Activated CD8-positive, alpha-beta memory T cell treated with anti-CD3 and anti-CD28 coated beads, Interleukin-2, amount 10 ng/mL, durations not matched to agents 7 days and 5 days (primary cell): ENCODE measurements at regions of chr19 and their contacts with region 1.

Region 1: DNA sequence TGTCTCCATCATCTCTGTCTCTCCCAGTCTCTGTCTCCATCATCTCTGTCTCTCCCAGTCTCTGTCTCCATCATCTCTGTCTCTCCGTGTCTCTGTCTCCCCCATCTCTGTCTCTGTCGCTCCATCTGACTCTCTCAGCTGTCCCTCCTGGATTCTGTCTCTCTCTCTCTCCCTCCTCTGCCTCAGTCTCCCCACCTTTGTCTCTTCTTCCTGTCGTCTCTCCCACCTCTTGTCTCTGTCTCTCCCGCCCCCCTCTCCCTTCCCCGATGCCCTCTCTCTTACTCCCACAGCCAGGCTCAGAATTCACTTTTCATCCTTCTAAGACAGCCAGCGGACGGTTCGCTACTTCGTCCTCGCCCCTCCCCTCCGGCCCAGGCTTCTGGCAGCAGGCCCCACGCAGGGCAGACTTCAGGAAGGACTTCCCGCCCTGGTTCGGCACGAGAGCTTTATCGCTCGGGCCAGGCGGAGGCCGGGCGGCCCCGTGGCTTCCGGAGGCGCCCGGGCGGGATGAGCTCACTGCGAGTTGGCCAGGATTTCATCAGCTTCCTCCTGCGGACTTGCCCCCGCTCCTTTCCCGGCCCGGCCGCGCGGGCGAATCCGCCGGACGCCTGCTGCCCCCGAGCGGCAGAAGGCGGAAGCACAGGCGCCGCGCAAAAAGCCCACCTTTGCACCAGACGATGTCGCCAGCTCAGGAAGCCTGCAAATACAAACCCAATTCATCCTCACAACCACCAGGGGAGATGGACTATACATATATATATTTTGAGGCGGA is 12.4 kb upstream of the CCDC9 start:
- DNase-seq: peak; percentile 96
- ATAC-seq: peak; percentile 84
- H3K4me3 Mint-ChIP-seq: peak overlapping the region; percentile 78
- H3K27ac Mint-ChIP-seq: peak overlapping the region; percentile 91
- H3K4me1 Mint-ChIP-seq: peaks cover 36% of the 10 kb centered on the region
- H3K27me3 Mint-ChIP-seq: peaks cover 3% of the 10 kb centered on the region

Region 2: GRCh38 chr19:47035127-47036096 is 208.6 kb before region 1 on chr19:
- CTCF ChIA-PET with region 1: interaction called, 14 read pairs
- DNase-seq: peak; percentile 96
- ATAC-seq: peak; percentile 93
- H3K4me3 Mint-ChIP-seq: peak overlapping the region; percentile 88
- H3K27ac Mint-ChIP-seq: peak overlapping the region; percentile 79
- H3K4me1 Mint-ChIP-seq: peaks cover 17% of the 10 kb centered on the region
- H3K27me3 Mint-ChIP-seq: peaks cover 27% of the 10 kb centered on the region

Region 3: GRCh38 chr19:47145639-47146486 is 98.1 kb before region 1 on chr19:
- CTCF ChIA-PET with region 1: interaction called, 106 read pairs
- DNase-seq: no peak
- ATAC-seq: peak; percentile 61
- H3K4me3 Mint-ChIP-seq: no peak overlapping the region
- H3K27ac Mint-ChIP-seq: peak overlapping the region; percentile 55
- H3K4me1 Mint-ChIP-seq: peaks cover 46% of the 10 kb centered on the region
- H3K27me3 Mint-ChIP-seq: no peaks in the 10 kb centered on the region

Region 4: GRCh38 chr19:47157431-47158321 is 86.3 kb before region 1 on chr19:
- CTCF ChIA-PET with region 1: interaction called, 32 read pairs
- DNase-seq: peak; percentile 51
- ATAC-seq: peak; percentile 46
- H3K4me3 Mint-ChIP-seq: peak overlapping the region; percentile 10
- H3K27ac Mint-ChIP-seq: peak overlapping the region; percentile 73
- H3K4me1 Mint-ChIP-seq: peaks cover 44% of the 10 kb centered on the region
- H3K27me3 Mint-ChIP-seq: no peaks in the 10 kb centered on the region

Region 5: DNA sequence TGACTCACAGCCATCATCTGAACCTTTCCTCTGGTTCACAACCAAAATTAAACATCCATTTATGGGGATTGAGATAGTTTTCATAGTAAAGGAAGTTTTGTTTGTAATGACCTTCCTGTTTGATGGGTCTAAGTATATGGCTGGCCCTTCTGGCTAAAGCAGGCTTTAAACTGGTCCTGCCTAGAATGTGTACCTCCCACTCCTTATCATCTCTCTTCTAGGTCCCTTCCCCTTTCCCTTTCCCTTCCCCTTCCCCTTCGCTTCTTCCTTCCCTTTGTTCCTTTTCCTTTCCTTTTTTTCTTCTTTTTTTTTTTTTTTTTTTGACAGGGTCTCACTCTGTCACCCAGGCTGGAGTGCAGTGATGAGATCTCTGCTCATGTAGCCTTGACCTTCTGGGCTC is 48.5 kb before region 1 on chr19:
- CTCF ChIA-PET with region 1: interaction called, 38 read pairs
- DNase-seq: no peak
- ATAC-seq: no peak
- H3K4me3 Mint-ChIP-seq: no peak overlapping the region
- H3K27ac Mint-ChIP-seq: no peak overlapping the region
- H3K4me1 Mint-ChIP-seq: peaks cover 7% of the 10 kb centered on the region
- H3K27me3 Mint-ChIP-seq: no peaks in the 10 kb centered on the region

Region 6: DNA sequence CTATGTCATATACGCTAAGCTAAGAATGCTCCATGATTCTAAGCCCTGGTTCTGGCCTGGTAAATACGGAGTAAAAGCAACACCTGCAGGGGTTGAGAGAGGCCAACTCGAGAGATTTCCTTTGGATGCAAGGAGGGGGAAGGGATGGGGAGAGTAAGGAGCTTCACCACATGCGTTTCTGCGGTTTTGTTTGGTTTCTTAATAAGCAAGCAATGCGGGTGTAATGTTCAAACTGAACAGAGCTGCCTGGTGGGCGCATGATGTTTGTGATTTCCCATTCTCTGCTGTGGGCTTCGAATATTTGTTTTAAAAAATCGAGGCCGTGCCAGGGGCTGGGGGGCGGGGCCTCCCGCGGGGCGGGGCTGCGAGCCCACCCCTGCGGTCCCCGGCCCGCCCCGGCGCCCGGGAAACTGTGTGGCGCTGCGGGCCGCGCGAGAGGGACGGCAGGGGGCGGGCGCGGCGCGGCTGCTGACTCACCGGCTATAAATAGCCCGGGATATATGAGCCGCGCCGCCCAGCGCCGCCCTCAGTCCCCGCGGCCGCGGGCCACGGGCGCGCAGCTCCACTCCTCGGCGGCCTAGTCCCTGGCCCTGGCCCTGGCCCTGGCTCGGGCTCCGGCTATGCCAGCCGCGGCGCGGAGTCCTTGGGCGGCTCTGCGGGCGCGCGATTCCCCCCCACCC is 18.1 kb before region 1 on chr19:
- CTCF ChIA-PET with region 1: interaction called, 136 read pairs
- DNase-seq: peak; percentile 88
- ATAC-seq: peak; percentile 67
- H3K4me3 Mint-ChIP-seq: peak overlapping the region; percentile 75
- H3K27ac Mint-ChIP-seq: peak overlapping the region; percentile 90
- H3K4me1 Mint-ChIP-seq: peaks cover 18% of the 10 kb centered on the region
- H3K27me3 Mint-ChIP-seq: no peaks in the 10 kb centered on the region

Region 7: DNA sequence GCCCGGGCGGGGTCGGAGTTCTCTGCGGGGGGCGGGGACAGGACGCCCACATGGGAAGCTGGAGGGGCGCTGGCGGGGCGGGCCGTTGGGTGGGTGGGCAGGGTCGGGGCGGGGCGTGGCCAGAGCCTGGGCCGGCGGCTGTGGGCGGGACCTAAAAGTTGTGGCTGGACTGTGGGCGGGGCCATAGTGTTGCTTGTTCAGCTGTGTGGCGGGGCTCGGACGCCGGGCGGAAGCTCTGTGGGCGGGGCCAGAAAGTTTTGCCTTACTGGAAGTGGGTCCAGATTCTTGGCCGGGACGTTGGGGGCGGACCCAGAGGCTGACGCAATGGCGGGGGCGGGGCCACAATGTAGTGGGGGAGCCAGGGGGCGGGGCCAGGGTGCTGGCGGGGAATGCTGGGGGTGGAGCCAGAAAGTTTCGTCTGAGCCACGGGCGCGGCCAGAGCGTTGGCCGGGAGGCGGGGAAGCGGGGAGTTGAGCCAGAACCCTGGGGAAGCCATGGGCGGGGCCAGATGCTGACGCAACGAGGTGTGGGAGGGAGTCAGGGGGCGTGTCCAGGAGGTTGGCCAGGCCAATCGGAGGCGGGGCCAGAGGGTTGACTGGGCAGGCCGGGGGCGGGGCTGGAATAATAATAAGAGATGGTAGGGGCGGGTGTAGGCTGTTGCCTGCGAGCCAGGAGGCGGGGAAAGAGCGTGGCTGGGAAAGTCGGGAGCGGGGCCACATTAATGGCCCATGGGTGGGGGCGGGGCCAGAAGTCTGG is 12.9 kb after region 1 on chr19:
- CTCF ChIA-PET with region 1: interaction called, 106 read pairs
- DNase-seq: peak; percentile 100
- ATAC-seq: peak; percentile 89
- H3K4me3 Mint-ChIP-seq: peak overlapping the region; percentile 85
- H3K27ac Mint-ChIP-seq: peak overlapping the region; percentile 92
- H3K4me1 Mint-ChIP-seq: peaks cover 24% of the 10 kb centered on the region
- H3K27me3 Mint-ChIP-seq: no peaks in the 10 kb centered on the region

Region 8: GRCh38 chr19:47305309-47305751 is 61.4 kb after region 1 on chr19:
- CTCF ChIA-PET with region 1: no interaction called
- DNase-seq: peak; percentile 47
- ATAC-seq: no peak
- H3K4me3 Mint-ChIP-seq: no peak overlapping the region
- H3K27ac Mint-ChIP-seq: no peak overlapping the region
- H3K4me1 Mint-ChIP-seq: peaks cover 8% of the 10 kb centered on the region
- H3K27me3 Mint-ChIP-seq: peaks cover 15% of the 10 kb centered on the region

Region 9: DNA sequence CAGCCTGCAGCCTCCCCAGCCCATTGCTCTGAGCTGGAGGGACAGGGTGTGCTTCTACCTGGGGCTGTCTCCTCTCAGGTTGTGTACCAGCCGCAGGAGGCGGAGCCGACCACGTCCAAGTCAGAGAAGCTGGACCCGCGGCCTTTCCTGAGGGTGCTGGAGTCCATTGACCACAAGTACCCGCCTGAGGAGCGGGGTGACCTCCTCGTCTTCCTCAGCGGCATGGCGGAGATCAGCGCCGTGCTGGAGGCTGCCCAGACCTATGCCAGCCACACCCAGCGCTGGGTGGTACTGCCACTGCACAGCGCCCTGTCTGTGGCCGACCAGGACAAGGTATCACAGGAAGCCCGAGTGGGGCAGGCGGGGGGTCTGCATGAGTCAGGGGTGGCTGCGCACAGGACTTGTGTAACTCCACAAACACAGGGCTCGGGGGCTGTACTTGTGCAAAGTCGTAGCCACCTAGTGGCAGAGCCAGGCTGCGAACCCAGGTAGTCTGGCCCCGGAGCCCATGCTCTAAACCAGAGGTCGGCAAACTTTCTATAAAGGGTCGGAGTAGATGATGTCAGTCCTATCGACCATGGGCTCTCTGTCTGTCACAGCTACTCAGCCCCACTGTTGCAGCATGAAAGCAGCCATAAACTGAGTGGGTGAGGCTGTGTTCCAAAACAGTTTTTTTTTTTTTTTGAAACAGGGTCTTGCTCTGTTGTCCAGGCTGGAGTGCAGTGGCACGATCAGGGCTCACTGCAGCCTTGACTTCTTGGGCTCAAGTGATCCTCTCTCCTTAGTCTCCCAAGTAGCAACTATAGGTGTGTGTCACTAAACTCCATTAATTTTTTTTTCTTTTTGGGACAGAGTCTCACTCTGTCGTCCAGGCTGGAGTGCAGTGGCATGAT is 114.1 kb after region 1 on chr19:
- CTCF ChIA-PET with region 1: no interaction called
- DNase-seq: no peak
- ATAC-seq: no peak
- H3K4me3 Mint-ChIP-seq: no peak overlapping the region
- H3K27ac Mint-ChIP-seq: no peak overlapping the region
- H3K4me1 Mint-ChIP-seq: peaks cover 2% of the 10 kb centered on the region
- H3K27me3 Mint-ChIP-seq: no peaks in the 10 kb centered on the region